ENCODE measurements at regions of chr19 and their contacts with region 1.

Region 1: DNA sequence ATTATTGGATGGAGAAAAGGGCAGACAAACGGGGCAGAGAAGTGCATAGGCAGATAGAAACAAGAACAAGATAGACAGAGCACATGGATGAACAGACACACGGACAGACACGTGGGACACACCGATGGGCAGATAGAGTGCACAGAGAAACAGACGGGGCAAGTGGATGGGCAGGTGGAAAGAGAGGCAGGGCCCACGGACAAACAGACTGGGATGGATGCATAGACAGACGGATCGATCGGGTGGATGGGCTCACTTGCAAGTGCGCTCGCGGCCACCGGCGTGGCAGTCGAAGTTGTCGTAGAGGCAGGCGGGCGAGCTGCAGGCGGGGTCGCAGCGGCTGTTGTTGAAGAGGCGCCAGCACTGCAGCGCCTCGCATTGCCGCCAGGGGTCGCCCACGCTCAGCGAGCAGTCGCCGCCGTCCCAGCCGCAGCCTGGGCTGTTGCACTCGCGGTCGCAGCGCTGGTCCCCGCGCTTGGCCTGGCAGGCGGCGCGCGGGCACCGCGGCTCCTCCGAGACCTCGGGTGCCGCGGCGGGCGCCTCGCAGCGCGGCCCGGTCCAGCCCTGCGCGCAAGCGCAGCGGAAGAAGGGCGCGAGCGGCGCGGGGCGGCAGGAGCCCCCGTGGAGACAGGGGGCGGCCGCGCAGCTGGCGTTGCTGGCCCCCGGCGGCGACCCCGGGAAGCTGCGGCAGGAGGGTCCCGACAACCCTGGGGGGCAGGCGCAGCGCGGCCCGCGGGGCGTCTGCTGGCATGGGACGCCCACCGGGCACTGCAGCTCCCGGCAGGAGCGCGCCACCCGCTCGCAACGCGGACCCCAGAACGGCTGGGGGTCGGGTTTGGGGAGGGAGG is 23.3 kb downstream of the NOTCH3 start:
- DNase-seq: peak; percentile 37 to 92 (median 82)

Region 2: GRCh38 chr19:15081911-15082310 is 95.6 kb before region 1 on chr19 and contains the start of gene OR1I1:
- intact Hi-C with region 1: no loop called
- DNase-seq: no peak

Region 3: DNA sequence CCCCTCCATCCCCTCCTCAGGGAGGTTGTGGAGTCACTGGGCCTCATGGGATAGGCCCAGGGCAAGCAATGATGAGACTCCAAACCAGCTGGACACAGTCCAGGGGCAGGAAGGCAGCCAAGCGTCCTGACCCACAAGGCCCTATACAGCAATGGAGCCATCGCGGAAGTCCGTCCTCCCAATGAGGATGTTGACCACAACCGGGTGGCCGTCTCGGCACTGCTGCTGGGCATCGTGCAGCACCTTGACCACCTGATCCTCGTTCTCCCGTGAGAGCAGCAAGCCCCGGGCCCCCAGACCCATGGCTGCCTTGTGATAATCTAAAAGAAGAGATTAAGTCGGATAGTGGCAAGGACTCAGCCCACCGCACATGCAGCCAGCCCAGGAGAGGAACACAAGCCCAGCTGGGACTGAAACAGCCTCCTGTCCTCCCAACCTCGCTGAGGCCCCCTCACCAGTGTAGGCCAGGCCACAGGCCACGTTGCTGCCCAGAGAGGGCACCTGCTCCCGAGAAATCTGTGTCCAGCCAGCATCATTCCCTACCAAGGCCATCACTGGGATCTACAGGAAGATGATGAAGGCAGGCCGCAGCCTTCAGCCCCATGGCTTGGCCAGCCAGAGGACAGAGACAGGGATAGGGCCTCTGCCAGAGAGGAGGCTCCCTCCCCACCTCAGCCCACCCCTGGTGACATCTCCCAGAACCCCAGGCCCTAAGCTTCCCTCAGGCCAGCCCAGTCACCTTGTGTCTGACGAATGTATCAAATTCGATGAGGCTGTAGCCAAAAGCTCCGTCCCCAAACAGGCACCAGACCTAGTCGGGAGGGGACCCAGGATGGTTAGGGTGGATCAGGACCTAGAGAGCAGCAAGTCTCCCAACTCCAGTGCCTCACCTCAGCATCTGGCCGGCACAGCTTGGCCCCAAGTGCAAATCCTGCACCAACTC is 62.1 kb before region 1 on chr19:
- intact Hi-C with region 1: no loop called
- DNase-seq: peak in 27 of 42 donors; percentile 24 to 75 (median 47)

Region 4: GRCh38 chr19:15210323-15210781 is 32.9 kb after region 1 on chr19:
- intact Hi-C with region 1: no loop called
- DNase-seq: peak in 3 of 42 donors; percentile 24 to 36 (median 33)

Region 5: DNA sequence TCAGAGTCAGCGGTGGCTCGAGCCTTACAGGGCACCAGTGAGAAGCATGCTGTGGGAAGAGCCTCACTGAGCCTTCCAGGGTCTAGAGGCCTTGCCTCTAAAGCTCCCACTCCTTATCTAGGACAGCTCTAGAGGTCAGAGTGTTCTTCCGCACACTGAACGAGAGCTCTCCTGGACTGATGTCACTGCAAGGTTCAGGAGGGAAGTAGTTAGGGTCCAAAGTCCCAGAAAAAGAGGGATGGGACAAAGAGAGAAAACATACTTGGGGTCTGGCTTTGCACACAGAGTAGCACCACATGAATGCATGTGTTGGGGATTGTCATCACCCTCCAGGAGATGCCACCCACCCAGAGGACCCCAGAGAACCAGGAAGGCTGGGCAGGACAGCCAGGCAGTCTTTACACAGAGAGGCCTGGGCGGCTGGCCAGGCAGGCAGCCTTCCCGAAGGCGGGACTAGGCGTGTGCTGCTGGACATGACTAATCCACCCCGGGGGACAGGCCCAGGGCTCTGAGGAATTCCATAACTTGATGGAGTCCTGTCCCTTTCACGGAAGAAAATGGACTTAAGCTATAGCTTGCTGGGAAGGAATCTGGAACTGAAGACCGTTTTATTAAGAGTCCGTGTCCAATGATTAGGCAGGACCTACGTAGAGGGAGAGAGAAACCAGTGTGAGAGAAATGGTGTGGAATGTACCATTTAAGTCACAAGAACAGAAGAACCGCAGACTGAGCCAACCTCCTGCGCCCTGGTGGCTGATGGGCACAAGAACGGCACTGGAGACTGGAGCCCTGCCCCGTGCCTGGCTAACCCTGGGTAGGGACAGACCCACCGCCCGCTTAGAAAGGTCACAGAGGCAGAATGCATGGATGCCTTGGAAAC is 71.4 kb after region 1 on chr19:
- intact Hi-C with region 1: loop called (anchors 5 kb)
- DNase-seq: peak in 18 of 42 donors; percentile 34 to 81 (median 52)

Measured in head of caudate nucleus (tissue), 42 donors.